ENCODE measurements at regions of chr2 and their contacts with region 1.

Region 1: GRCh38 chr2:127884436-127885345 is 1.1 kb downstream of the AMMECR1L start:
- DNase-seq: peak; percentile 31
- H3K4me3 Mint-ChIP-seq: peak overlapping the region; percentile 81
- H3K27ac Mint-ChIP-seq: peak overlapping the region; percentile 84
- H3K4me1 Mint-ChIP-seq: peaks cover 19% of the 10 kb centered on the region
- H3K27me3 Mint-ChIP-seq: no peaks in the 10 kb centered on the region
- CTCF ChIP-seq: no peak

Region 2: GRCh38 chr2:127932199-127932878 is 47.6 kb after region 1 on chr2:
- CTCF ChIA-PET with region 1: no interaction called
- POLR2A ChIA-PET with region 1: interaction called, 3 read pairs
- intact Hi-C with region 1: loop called (anchors 5 kb)
- DNase-seq: peak; percentile 84
- H3K4me3 Mint-ChIP-seq: no peak overlapping the region
- H3K27ac Mint-ChIP-seq: no peak overlapping the region
- H3K4me1 Mint-ChIP-seq: peaks cover 4% of the 10 kb centered on the region
- H3K27me3 Mint-ChIP-seq: no peaks in the 10 kb centered on the region
- CTCF ChIP-seq: no peak

Region 3: GRCh38 chr2:128027801-128028667 is 143.3 kb after region 1 on chr2 and contains the start of gene SAP130:
- CTCF ChIA-PET with region 1: no interaction called
- POLR2A ChIA-PET with region 1: interaction called, 5 read pairs
- intact Hi-C with region 1: loop called (anchors 5 kb)
- DNase-seq: peak; percentile 94
- H3K4me3 Mint-ChIP-seq: peak within 1 kb of the TSS; percentile 92
- H3K27ac Mint-ChIP-seq: peak within 1 kb of the TSS; percentile 57
- H3K4me1 Mint-ChIP-seq: peaks cover 7% of the 10 kb centered on the region
- H3K27me3 Mint-ChIP-seq: no peaks in the 10 kb centered on the region
- CTCF ChIP-seq: no peak
- total RNA-seq, gene SAP130: 18.8 and 23.5 TPM in 2 replicates